Esophagus squamous epithelium (tissue), 5 donors: ENCODE measurements at regions of chr11 and their contacts with region 1.

Region 1: GRCh38 chr11:727859-728748 is 19.2 kb upstream of the TALDO1 start:
- DNase-seq: no peak
- H3K4me3 ChIP-seq: no peak overlapping the region
- H3K27ac ChIP-seq: peak overlapping the region; percentile 75 to 88 (median 78)
- H3K4me1 ChIP-seq: peaks cover 33 to 60% (median 45%) of the 10 kb centered on the region in 3 donors
- H3K27me3 ChIP-seq: peaks cover 0 to 52% (median 0%) of the 10 kb centered on the region in 4 donors
- CTCF ChIP-seq: peak; percentile 96 to 99 (median 98)
- POLR2A ChIP-seq: no peak

Region 2: GRCh38 chr11:269146-269890 is 458.8 kb before region 1 on chr11:
- intact Hi-C with region 1: no loop called
- DNase-seq: no peak
- H3K4me3 ChIP-seq: peak overlapping the region in 3 of 4 donors; percentile 10 to 60 (median 43)
- H3K27ac ChIP-seq: peak overlapping the region in 3 of 4 donors; percentile 68 to 89 (median 82)
- H3K4me1 ChIP-seq: peaks cover 0 to 13% (median 0%) of the 10 kb centered on the region in 3 donors
- H3K27me3 ChIP-seq: peaks cover 0 to 34% (median 0%) of the 10 kb centered on the region in 4 donors
- CTCF ChIP-seq: peak in 2 of 6 experiments; percentile 7 to 39
- POLR2A ChIP-seq: peak in 2 of 4 donors; percentile 13 to 32

Region 3: GRCh38 chr11:554824-555472 is 173.2 kb before region 1 on chr11:
- intact Hi-C with region 1: loop called (anchors 5 kb)
- DNase-seq: no peak
- H3K4me3 ChIP-seq: peak overlapping the region; percentile 27 to 62 (median 44)
- H3K27ac ChIP-seq: peak overlapping the region in 1 of 4 donors; percentile 9
- H3K4me1 ChIP-seq: peaks cover 16 to 34% (median 24%) of the 10 kb centered on the region in 3 donors
- H3K27me3 ChIP-seq: peaks cover 0 to 93% (median 3%) of the 10 kb centered on the region in 4 donors
- CTCF ChIP-seq: peak; percentile 52 to 71 (median 64)
- POLR2A ChIP-seq: no peak

Region 4: GRCh38 chr11:662689-663274 is 65.3 kb before region 1 on chr11:
- intact Hi-C with region 1: loop called (anchors 10 kb)
- DNase-seq: no peak
- H3K4me3 ChIP-seq: no peak overlapping the region
- H3K27ac ChIP-seq: no peak overlapping the region
- H3K4me1 ChIP-seq: peaks cover 6 to 32% (median 11%) of the 10 kb centered on the region in 3 donors
- H3K27me3 ChIP-seq: no peaks in the 10 kb centered on the region
- CTCF ChIP-seq: peak; percentile 65 to 77 (median 72)
- POLR2A ChIP-seq: no peak